ENCODE measurements at regions of chr5 and their contacts with region 1.

Region 1: GRCh38 chr5:40798012-40798855 is at the start of gene PRKAA1:
- DNase-seq: peak; percentile 83
- ATAC-seq: peak; percentile 93
- H3K4me3 ChIP-seq: peak within 1 kb of the TSS; percentile 98
- H3K27ac ChIP-seq: peak within 1 kb of the TSS; percentile 100
- H3K4me1 ChIP-seq: peaks cover 2% of the 10 kb centered on the region; the same call in 1 of the 2 replicates
- H3K27me3 ChIP-seq: no peaks in the 10 kb centered on the region
- CTCF ChIP-seq: peak; percentile 73
- POLR2A ChIP-seq: peak; percentile 74; the same call in 1 of the 2 replicates
- RAD21 ChIP-seq: peak; percentile 46
- total RNA-seq, gene PRKAA1: 94.1 and 129 TPM in 2 replicates

Region 2: DNA sequence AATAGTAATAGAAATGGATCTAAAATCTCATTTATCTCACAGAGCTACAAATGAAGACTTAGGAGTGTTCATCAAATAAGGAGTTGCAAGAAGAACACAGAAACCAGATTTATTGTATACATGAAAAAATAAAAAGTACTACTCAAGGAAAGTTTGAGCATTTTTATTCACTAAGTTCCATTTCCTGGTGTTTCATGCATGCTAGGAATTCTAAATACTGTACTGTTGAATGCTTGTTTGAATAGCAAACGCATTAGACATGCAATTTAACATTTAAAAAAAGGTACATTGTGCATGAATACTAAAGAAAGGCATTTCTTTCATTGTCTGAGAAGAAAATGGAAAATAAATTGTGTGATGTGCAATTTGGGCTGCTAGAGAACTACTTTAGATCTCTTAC is 363.0 kb after region 1 on chr5:
- CTCF ChIA-PET with region 1: no interaction called
- POLR2A ChIA-PET with region 1: no interaction called
- dilution Hi-C with region 1: no loop called
- in situ Hi-C with region 1: no loop called
- intact Hi-C with region 1: no loop called
- DNase-seq: peak; percentile 77
- ATAC-seq: peak; percentile 89
- H3K4me3 ChIP-seq: no peak overlapping the region
- H3K27ac ChIP-seq: peak overlapping the region; percentile 95
- H3K4me1 ChIP-seq: peaks cover 12% of the 10 kb centered on the region
- H3K27me3 ChIP-seq: no peaks in the 10 kb centered on the region
- CTCF ChIP-seq: no peak
- POLR2A ChIP-seq: no peak
- RAD21 ChIP-seq: no peak

Region 3: DNA sequence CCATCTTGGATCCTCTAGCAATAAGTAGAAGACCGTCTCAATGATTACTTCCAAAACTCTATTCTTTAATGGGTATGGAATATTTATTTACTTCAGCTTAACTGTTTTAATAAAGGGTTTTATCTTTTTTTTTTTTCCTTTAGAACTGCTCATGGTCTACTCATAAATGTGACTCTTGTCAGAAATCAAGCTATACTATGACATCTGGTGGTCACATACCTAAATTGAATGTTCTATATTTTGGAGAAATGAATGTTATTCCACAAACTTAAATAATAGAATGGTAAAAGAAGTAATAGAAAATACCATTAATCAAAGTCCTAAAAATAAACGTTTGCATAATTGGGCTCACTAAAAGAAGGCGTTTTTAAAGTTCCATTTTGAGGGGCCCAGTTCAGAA is 843.4 kb after region 1 on chr5:
- CTCF ChIA-PET with region 1: no interaction called
- POLR2A ChIA-PET with region 1: interaction called, 28 read pairs
- dilution Hi-C with region 1: no loop called
- in situ Hi-C with region 1: no loop called
- intact Hi-C with region 1: no loop called
- DNase-seq: peak; percentile 16
- ATAC-seq: no peak
- H3K4me3 ChIP-seq: no peak overlapping the region
- H3K27ac ChIP-seq: no peak overlapping the region
- H3K4me1 ChIP-seq: no peaks in the 10 kb centered on the region
- H3K27me3 ChIP-seq: no peaks in the 10 kb centered on the region
- CTCF ChIP-seq: peak; percentile 39
- POLR2A ChIP-seq: no peak
- RAD21 ChIP-seq: peak; percentile 51